ENCODE measurements at regions of chr1 and their contacts with region 1.

Region 1: DNA sequence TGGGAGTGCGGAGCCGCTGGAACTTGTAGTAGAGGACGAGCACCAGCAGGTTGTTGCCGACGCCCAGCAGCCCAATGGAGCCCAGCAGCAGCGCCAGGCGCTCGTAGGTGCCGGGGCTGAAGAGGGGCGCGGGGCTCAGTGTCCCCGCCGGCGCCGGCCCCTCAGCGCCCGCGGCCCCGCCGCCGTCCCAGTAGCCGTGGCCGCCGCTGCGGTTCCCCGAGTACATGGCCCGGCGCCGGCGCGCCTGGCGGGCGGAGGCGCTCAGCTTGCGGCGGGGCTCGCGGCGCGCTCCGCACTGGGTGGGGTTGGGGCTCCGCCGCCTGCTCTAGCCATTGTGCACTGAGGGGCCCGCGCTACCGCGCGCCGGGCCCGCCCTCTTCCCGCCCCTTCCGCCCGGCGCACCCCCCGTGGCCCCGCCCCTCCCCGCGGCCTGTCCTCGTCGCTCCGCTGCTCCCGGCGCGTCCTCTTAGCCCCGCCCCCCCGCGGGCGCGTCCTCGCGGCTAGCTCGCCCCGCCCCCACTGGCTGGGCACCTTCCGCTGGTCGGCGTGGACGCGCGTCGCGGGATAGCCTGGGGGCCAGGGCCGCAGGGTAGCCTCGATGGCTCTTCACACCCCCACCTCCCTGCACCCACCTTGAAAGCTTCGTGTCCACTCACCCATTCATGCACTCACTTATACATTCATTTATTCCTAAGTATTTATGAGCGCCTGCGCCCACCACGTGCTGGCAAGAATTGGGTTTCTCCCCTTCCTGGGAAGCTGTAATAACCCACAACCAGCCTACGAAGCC is at the starts of genes CHML and OPN3:
- DNase-seq: peak; percentile 94
- H3K4me3 Mint-ChIP-seq: peak within 1 kb of the TSS; percentile 69
- H3K27ac Mint-ChIP-seq: peak within 1 kb of the TSS; percentile 63
- H3K4me1 Mint-ChIP-seq: peaks cover 38% of the 10 kb centered on the region
- H3K27me3 Mint-ChIP-seq: no peaks in the 10 kb centered on the region
- total RNA-seq, gene CHML: 8.9 to 9.9 TPM
- total RNA-seq, gene OPN3: 8.0 to 9.6 TPM

Region 2: DNA sequence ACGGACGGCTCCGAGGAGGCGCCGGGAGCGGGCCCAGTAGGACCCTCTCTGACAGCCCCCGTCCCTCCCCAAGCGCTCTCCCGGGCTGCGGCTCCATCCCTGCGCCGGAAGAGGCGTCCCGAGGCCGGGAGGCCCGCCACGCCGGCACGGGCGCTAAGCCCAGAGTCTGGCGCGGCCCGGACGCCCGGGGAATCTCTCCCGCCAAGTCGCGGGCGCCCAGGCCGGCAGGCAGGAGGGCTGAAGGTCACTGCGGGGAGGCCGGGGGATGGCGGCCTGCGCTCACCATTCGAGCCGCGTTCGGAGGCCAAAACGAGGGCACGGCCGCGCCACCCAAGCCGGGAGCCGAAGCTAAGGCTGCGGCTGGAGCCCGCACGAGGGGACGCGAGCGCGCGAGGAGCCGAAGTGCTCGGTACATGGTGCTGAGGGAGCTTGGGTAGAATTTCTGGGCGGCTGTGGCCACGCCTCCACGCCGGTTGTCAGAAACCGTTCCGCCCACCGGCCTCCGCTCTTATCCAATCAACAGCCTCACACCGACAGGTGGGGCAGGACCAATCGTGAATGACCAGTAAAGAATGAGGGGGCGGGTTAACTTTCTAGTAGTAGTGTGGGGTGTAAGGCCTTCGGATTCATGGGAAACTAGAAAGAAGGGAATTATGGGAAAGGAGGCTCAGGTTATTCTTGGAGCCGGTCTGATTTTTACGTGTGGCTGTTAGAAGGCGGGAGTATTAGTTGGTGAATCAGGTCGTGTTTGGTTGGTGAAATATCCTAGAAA is 120.7 kb before region 1 on chr1 and contains the start of gene FH:
- CTCF ChIA-PET with region 1: no interaction called
- POLR2A ChIA-PET with region 1: interaction called, 10 read pairs
- DNase-seq: peak; percentile 95
- H3K4me3 Mint-ChIP-seq: peak within 1 kb of the TSS; percentile 83
- H3K27ac Mint-ChIP-seq: peak within 1 kb of the TSS; percentile 70
- H3K4me1 Mint-ChIP-seq: peaks cover 27% of the 10 kb centered on the region
- H3K27me3 Mint-ChIP-seq: peaks cover 26% of the 10 kb centered on the region
- total RNA-seq, gene FH: 56.6 to 58.8 TPM

Region 3: GRCh38 chr1:241627453-241628259 is 12.6 kb before region 1 on chr1:
- CTCF ChIA-PET with region 1: interaction called, 10 read pairs
- POLR2A ChIA-PET with region 1: interaction called, 4 read pairs
- DNase-seq: peak; percentile 39
- H3K4me3 Mint-ChIP-seq: peak overlapping the region; percentile 9
- H3K27ac Mint-ChIP-seq: peak overlapping the region; percentile 57
- H3K4me1 Mint-ChIP-seq: peaks cover 11% of the 10 kb centered on the region
- H3K27me3 Mint-ChIP-seq: no peaks in the 10 kb centered on the region

Region 4: DNA sequence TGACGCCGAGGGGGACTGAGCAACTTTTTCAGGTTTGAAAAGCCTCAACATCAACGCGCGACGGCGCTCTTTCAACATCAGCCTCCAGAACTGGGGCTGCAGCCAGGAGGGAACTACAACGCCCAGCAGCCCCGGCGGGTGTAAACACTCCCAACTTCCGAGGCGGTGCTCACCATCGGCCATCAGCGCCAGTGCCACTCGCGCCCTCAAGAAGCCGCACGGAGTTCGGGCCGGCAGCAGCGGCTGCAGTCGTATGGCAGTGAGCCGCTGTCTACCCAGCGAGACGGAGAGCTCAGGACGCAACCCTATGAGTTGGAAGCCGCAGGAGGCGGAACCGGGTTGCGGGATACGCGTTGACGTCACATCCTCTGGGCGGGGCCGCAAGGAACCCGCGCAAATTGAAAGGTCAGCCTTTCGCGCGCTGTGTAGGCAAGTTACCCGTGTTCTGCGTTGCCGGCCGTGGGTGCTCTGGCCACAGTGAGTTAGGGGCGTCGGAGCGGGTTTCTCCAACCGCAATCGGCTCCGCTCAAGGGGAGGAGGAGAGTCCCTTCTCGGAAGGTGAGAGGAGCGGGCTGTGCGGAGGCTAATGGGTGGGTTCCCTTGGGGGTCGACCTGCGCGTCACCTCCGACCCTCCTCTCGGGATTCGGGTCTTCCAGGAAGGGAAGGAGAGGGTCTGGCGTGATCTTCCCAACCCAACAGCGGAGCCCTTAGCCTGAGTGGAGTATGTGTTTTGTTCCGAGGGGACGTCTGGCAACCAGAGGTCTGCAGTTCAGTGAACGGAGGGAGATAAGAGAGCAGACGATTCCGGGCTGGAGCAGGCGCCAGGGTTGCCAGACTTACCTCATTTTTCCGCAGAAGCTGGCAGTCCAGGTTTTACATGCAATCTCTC is 207.8 kb after region 1 on chr1 and contains the start of gene EXO1:
- CTCF ChIA-PET with region 1: no interaction called
- POLR2A ChIA-PET with region 1: interaction called, 16 read pairs
- DNase-seq: peak; percentile 91
- H3K4me3 Mint-ChIP-seq: peak within 1 kb of the TSS; percentile 92
- H3K27ac Mint-ChIP-seq: peak within 1 kb of the TSS; percentile 99
- H3K4me1 Mint-ChIP-seq: peaks cover 30% of the 10 kb centered on the region
- H3K27me3 Mint-ChIP-seq: peaks cover 3% of the 10 kb centered on the region
- total RNA-seq, gene EXO1: 30.1 to 31.9 TPM

Measured in activated CD4-positive, alpha-beta memory T cell treated with anti-CD3 and anti-CD28 coated beads, Interleukin-2, amount 10 ng/mL, durations not matched to agents 7 days and 5 days (primary cell).